SK-N-SH (cell line): ENCODE measurements at regions of chr1 and their contacts with region 1.

Region 1: DNA sequence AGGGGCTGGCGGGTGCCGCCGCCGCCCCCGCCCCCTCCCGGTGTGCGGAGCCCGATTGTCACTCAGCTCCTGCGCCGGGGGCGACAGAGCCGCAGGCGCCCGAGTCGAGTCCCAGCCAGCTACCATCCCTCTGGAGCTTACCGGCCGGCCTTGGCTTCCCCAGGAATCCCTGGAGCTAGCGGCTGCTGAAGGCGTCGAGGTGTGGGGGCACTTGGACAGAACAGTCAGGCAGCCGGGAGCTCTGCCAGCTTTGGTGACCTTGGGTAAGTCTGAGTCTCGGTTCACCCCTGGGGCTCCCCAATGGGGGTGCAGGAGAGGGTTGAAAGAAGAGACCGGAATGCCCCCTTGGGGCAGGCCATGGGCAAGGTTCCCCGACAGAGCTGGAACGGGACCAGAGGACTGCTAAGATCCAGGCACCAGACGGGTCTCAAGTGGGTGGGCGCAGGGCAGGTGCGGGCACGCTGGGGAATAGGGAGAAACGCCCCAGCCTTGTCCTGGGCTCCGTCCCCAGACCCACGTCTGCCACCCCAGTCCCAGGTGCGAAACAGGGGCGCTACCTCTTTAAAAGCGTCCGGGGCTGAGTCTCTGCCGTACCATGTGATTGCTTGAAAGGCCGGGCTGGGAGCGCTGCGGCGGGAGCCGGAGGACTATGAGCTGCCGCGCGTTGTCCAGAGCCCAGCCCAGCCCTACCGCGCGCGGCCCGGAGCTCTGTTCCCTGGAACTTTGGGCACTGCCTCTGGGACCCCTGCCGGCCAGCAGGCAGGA is at the start of gene ADORA1:
- DNase-seq: peak; percentile 80
- H3K4me3 ChIP-seq: peak within 1 kb of the TSS; percentile 48 to 55
- H3K27ac ChIP-seq: no peak within 1 kb of the TSS
- H3K4me1 ChIP-seq: peaks cover 21 to 69% of the 10 kb centered on the region in 2 experiments
- H3K27me3 ChIP-seq: no peaks in the 10 kb centered on the region; the same call in 1 of the 2 replicates
- CTCF ChIP-seq: peak; percentile 28; the same call in 1 of the 2 replicates
- EP300 ChIP-seq: no peak
- RAD21 ChIP-seq: no peak
- polyA plus RNA-seq, gene ADORA1: 3.2 and 4.8 TPM in 2 replicates

Region 2: DNA sequence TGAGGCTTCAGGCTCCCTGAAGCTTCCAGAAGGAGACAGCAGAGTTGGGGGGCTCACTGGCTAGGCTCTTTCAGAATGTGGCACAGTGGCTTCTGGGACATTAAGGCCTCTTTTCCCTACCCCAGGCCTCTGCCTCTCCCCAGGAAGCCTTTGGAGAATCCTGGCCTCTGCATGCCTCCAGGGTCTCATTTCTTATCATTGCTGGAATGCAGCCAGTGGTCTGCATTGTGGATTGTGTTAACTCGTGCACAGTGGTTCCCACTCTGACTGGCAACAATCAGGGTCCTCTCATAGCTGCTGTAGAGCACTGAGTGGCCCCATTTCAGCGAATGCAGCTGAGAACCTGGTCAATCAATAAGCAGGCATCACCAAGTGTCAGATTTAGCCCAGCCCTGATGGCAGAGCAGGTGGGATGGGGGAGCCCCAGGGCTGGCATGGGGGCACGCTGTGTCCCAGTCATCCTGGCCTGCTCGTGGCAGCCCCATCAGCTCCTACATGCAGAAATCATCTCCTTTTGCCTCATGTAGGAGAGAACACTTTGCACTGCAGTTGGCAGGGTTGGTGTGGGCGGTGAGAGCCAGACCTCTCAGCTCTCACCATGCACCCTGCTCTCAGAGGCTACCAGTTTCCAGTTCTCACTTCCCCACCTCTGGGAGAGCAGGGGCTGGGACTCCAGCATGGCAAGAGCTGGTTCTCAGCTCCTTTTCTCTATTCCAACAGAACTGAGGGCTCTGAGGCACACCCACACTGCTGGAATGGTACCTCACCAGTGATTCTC is 13.1 kb after region 1 on chr1:
- CTCF ChIA-PET with region 1: interaction called, 18 read pairs
- POLR2A ChIA-PET with region 1: no interaction called
- DNase-seq: peak; percentile 84
- H3K4me3 ChIP-seq: no peak overlapping the region
- H3K27ac ChIP-seq: peak overlapping the region in 1 of 2 experiments; percentile 55; a peak in 2 of 4 replicates
- H3K4me1 ChIP-seq: peaks cover 0 to 32% of the 10 kb centered on the region in 2 experiments; a peak in 1 of 4 replicates
- H3K27me3 ChIP-seq: no peaks in the 10 kb centered on the region
- CTCF ChIP-seq: no peak
- EP300 ChIP-seq: peak in 1 of 2 experiments; percentile 74; a peak in 1 of 4 replicates
- RAD21 ChIP-seq: no peak; the same call in 1 of the 2 replicates

Region 3: GRCh38 chr1:203148125-203148524 is 20.3 kb after region 1 on chr1:
- CTCF ChIA-PET with region 1: interaction called, 19 read pairs
- POLR2A ChIA-PET with region 1: no interaction called
- DNase-seq: no peak
- H3K4me3 ChIP-seq: no peak overlapping the region
- H3K27ac ChIP-seq: no peak overlapping the region
- H3K4me1 ChIP-seq: peaks cover 18 to 48% of the 10 kb centered on the region in 2 experiments; a peak in 3 of 4 replicates
- H3K27me3 ChIP-seq: no peaks in the 10 kb centered on the region
- CTCF ChIP-seq: peak; percentile 51
- EP300 ChIP-seq: no peak
- RAD21 ChIP-seq: no peak